CD4-positive, alpha-beta T cell (primary cell): ENCODE measurements at regions of chr1 and their contacts with region 1.

Region 1: GRCh38 chr1:41936118-41936517 is 17.4 kb upstream of the HIVEP3 start:
- DNase-seq: no peak
- ATAC-seq: no peak
- H3K4me3 ChIP-seq: no peak overlapping the region
- H3K4me3 Mint-ChIP-seq: no peak overlapping the region
- H3K27ac ChIP-seq: no peak overlapping the region
- H3K27ac Mint-ChIP-seq: no peak overlapping the region
- H3K4me1 ChIP-seq: no peaks in the 10 kb centered on the region
- H3K4me1 Mint-ChIP-seq: peaks cover 5% of the 10 kb centered on the region
- H3K27me3 ChIP-seq: no peaks in the 10 kb centered on the region
- H3K27me3 Mint-ChIP-seq: no peaks in the 10 kb centered on the region
- CTCF ChIP-seq: no peak

Region 2: GRCh38 chr1:41980827-41981653 is 44.9 kb after region 1 on chr1:
- CTCF ChIA-PET with region 1: no interaction called
- POLR2A ChIA-PET with region 1: no interaction called
- intact Hi-C with region 1: loop called in 1 of 2 experiments (anchors 10 kb)
- DNase-seq: peak in 3 of 14 experiments; percentile 19 to 37 (median 32)
- ATAC-seq: peak; percentile 41
- H3K4me3 ChIP-seq: no peak overlapping the region
- H3K4me3 Mint-ChIP-seq: peak overlapping the region; percentile 32
- H3K27ac ChIP-seq: no peak overlapping the region
- H3K27ac Mint-ChIP-seq: peak overlapping the region; percentile 24
- H3K4me1 ChIP-seq: peaks cover 17% of the 10 kb centered on the region
- H3K4me1 Mint-ChIP-seq: peaks cover 37% of the 10 kb centered on the region
- H3K27me3 ChIP-seq: no peaks in the 10 kb centered on the region
- H3K27me3 Mint-ChIP-seq: no peaks in the 10 kb centered on the region
- CTCF ChIP-seq: no peak

Region 3: DNA sequence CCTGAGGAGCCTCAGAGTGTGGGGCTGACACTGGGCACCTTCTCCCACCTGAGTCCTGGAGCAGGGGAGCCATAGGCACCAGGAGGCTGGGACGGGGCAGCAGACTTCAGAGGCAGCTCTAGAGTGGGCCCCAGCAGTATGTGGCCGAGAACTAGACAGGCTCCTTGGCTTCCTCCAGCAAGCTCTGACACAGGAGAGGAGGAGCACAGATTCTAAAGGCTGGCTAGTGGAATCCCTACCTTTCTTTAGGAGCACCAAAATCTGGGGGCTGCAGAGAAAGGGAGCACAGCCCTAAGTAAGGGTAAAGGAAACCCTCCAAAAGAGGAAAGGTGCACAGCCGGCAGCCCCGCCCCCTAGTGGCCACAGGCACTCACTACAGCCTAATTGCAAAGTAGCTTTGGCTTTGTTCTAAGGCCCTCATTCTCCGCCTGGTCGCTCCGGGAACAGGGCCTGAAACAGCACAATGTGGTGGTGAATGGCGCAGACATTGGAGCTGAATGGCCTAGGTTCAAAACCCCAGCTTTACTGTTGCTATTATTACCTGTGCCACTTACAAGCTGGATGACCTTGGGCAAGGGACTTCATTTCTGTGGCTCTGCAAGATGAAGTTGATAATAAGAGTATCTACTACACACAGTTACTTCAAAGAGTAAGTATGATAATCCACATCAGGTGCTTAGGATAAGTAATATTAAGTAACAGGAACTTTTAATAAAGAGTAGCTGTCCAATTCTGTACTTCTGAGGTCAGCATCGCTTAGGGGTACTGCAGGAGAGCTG is 237.2 kb after region 1 on chr1:
- CTCF ChIA-PET with region 1: no interaction called
- POLR2A ChIA-PET with region 1: no interaction called
- intact Hi-C with region 1: no loop called
- DNase-seq: peak; percentile 46 to 78 (median 60)
- ATAC-seq: peak; percentile 77
- H3K4me3 ChIP-seq: no peak overlapping the region
- H3K4me3 Mint-ChIP-seq: no peak overlapping the region
- H3K27ac ChIP-seq: no peak overlapping the region
- H3K27ac Mint-ChIP-seq: no peak overlapping the region
- H3K4me1 ChIP-seq: peaks cover 5% of the 10 kb centered on the region
- H3K4me1 Mint-ChIP-seq: no peaks in the 10 kb centered on the region
- H3K27me3 ChIP-seq: no peaks in the 10 kb centered on the region
- H3K27me3 Mint-ChIP-seq: no peaks in the 10 kb centered on the region
- CTCF ChIP-seq: peak; percentile 97